Activated T-helper 1 cell treated with anti-CD3 and anti-CD28 coated beads, Interleukin-12 subunit alpha, Interleukin-12 subunit beta, Interleukin-2, Interleukin-4 antibody, amounts not matched to agents 30 ng/mL and 10 ng/mL and 1 ng/mL, durations not matched to agents 14 hours and 24 hours and 36 hours (primary cell): ENCODE measurements at regions of chr12 and their contacts with region 1.

Region 1: GRCh38 chr12:53220801-53221202 is 11.2 kb downstream of the RARG start:
- DNase-seq: peak; percentile 83
- H3K4me3 Mint-ChIP-seq: peak overlapping the region; percentile 94
- H3K27ac Mint-ChIP-seq: peak overlapping the region; percentile 98
- H3K4me1 Mint-ChIP-seq: peaks cover 83% of the 10 kb centered on the region
- H3K27me3 Mint-ChIP-seq: peaks cover 2% of the 10 kb centered on the region

Region 2: DNA sequence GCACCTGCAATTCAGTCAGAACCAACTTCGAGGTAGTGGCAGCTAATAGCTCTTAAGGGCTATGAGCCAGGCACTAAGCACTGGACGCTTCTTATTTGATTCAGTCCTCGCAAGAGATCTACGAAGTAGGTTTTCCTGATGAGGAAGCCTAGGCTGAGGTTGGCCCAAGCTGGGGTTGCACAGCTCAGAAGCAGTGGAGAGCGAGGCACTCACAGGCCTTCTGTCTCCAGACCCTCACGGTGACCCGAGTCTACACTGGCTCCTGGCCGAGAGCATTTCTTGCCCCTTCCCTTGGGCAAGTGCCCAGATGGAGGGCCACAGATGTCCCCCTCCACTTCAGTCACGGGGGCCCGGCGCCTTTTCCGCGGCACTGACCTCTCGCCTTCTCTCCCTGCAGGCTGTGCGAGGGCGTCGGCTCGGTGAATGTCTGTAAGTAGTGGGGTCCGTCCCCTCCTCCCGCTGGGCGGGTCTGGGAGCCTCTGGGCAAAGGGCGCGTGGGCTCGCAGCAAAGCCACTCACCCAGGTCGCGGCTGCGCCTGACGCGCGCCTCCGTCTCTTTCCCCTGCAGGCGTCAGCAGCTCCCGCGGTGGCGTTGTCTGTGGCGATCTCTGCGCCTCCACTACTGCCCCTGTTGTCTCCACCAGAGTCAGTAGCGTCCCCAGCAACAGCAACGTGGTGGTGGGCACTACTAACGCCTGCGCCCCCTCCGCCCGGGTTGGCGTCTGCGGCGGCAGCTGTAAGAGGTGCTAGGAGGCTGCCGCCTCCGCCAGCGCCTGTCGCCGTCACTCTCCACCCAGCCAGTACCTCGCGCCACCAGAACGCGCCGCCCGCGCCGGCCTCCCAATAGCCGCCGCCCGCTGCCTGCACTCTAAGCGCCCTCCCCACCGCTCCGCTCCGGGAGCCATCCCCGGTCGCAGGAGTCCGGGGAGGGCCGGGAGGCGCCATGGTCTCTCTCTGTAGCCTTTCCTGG is 912.7 kb before region 1 on chr12:
- intact Hi-C with region 1: no loop called
- DNase-seq: peak; percentile 7
- H3K4me3 Mint-ChIP-seq: peak overlapping the region; percentile 44
- H3K27ac Mint-ChIP-seq: no peak overlapping the region
- H3K4me1 Mint-ChIP-seq: peaks cover 17% of the 10 kb centered on the region
- H3K27me3 Mint-ChIP-seq: peaks cover 66% of the 10 kb centered on the region

Region 3: DNA sequence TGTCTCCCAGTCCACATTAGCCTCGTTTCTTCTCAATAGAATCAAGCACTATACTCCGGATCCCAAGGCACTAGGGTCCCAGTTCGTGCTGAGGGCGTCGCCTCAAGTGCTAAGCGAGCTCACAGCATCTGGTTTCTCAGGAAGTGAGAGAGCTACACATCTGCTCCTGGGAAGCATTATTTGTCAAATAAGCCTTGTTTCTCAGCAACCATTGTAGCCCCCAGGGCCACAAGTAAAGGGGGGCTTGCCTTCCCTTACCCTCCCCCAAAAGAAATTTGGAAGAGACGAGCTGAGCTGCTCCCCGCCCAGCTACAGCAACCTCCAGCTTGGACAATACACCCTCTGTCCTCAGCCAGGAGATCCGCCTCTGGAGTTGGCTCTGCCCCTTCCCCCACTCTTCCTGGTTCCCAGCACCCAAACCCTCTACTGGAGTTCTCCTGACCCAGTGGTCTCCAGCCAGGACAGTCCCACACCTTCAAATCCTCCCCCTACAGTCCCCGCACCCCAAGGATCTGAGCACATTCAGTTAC is 176.7 kb before region 1 on chr12:
- intact Hi-C with region 1: no loop called
- DNase-seq: no peak
- H3K4me3 Mint-ChIP-seq: no peak overlapping the region
- H3K27ac Mint-ChIP-seq: no peak overlapping the region
- H3K4me1 Mint-ChIP-seq: peaks cover 27% of the 10 kb centered on the region
- H3K27me3 Mint-ChIP-seq: peaks cover 9% of the 10 kb centered on the region

Region 4: DNA sequence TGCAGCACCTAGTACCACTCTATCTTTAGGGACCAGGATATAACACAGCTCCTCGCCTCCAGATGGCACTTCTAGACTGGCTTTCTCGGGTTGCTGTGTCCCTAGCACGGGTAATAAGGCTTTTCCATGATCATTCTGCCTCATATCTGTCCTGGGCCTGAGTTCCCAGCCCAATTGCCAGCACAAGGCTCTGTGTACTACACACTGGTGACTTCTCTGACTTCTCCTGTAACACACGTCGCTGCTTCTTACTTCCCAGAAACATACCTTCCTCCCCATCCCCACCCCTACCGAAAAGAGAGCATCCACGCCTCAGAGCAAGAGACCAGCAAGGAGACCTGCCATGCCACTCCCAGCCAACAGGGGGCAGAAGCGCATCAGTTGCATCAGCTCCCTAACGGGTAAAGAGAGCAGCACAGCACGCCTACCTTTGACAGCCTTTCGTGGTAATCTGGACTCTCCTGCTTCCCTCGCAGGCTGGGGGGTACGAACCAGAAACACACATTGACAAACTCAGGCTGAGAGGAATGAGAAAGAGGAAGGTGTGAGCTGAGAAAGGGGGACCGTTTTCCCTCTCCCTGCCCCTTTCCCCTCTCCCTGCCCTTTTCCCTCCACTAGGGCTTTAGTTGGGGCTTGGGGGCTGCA is 61.5 kb before region 1 on chr12:
- intact Hi-C with region 1: no loop called
- DNase-seq: peak; percentile 83
- H3K4me3 Mint-ChIP-seq: no peak overlapping the region
- H3K27ac Mint-ChIP-seq: peak overlapping the region; percentile 50
- H3K4me1 Mint-ChIP-seq: peaks cover 10% of the 10 kb centered on the region
- H3K27me3 Mint-ChIP-seq: no peaks in the 10 kb centered on the region

Region 5: GRCh38 chr12:53180220-53180930 is 40.4 kb before region 1 on chr12 and contains the starts of genes CSAD and ZNF740:
- intact Hi-C with region 1: loop called (anchors 1 kb)
- DNase-seq: peak; percentile 97
- H3K4me3 Mint-ChIP-seq: peak within 1 kb of the TSS; percentile 88
- H3K27ac Mint-ChIP-seq: peak within 1 kb of the TSS; percentile 99
- H3K4me1 Mint-ChIP-seq: peaks cover 52% of the 10 kb centered on the region
- H3K27me3 Mint-ChIP-seq: no peaks in the 10 kb centered on the region
- total RNA-seq, gene CSAD: 21.7 and 22.6 TPM in 2 replicates
- total RNA-seq, gene ZNF740: 48.1 and 52.8 TPM in 2 replicates

Region 6: GRCh38 chr12:53231826-53232645 is 11.2 kb after region 1 on chr12 and contains the start of gene RARG:
- intact Hi-C with region 1: loop called (anchors 1 kb)
- DNase-seq: peak; percentile 42
- H3K4me3 Mint-ChIP-seq: peak within 1 kb of the TSS; percentile 88
- H3K27ac Mint-ChIP-seq: peak within 1 kb of the TSS; percentile 88
- H3K4me1 Mint-ChIP-seq: peaks cover 78% of the 10 kb centered on the region
- H3K27me3 Mint-ChIP-seq: no peaks in the 10 kb centered on the region
- total RNA-seq, gene RARG: 58.6 and 61.6 TPM in 2 replicates

Region 7: GRCh38 chr12:53295070-53295890 is 74.5 kb after region 1 on chr12 and contains the start of gene PFDN5:
- intact Hi-C with region 1: loop called (anchors 1 kb)
- DNase-seq: peak; percentile 86
- H3K4me3 Mint-ChIP-seq: peak within 1 kb of the TSS; percentile 99
- H3K27ac Mint-ChIP-seq: peak within 1 kb of the TSS; percentile 91
- H3K4me1 Mint-ChIP-seq: peaks cover 50% of the 10 kb centered on the region
- H3K27me3 Mint-ChIP-seq: no peaks in the 10 kb centered on the region
- total RNA-seq, gene PFDN5: 344 and 350 TPM in 2 replicates

Region 8: GRCh38 chr12:53551889-53552291 is 331.1 kb after region 1 on chr12:
- intact Hi-C with region 1: no loop called
- DNase-seq: no peak
- H3K4me3 Mint-ChIP-seq: no peak overlapping the region
- H3K27ac Mint-ChIP-seq: no peak overlapping the region
- H3K4me1 Mint-ChIP-seq: peaks cover 7% of the 10 kb centered on the region
- H3K27me3 Mint-ChIP-seq: no peaks in the 10 kb centered on the region